ENCODE measurements at regions of chr17 and their contacts with region 1.

Region 1: GRCh38 chr17:9999919-10000695 is 95.0 kb upstream of the RCVRN start:
- DNase-seq: no peak
- ATAC-seq: no peak

Region 2: GRCh38 chr17:9905902-9906301 is 94.2 kb before region 1 on chr17:
- intact Hi-C with region 1: no loop called
- DNase-seq: peak; percentile 67
- ATAC-seq: peak; percentile 27 to 35

Region 3: GRCh38 chr17:9948928-9949327 is 51.2 kb before region 1 on chr17:
- intact Hi-C with region 1: loop called in 1 of 2 experiments (anchors 10 kb)
- DNase-seq: no peak
- ATAC-seq: peak; percentile 22 to 47

Region 4: DNA sequence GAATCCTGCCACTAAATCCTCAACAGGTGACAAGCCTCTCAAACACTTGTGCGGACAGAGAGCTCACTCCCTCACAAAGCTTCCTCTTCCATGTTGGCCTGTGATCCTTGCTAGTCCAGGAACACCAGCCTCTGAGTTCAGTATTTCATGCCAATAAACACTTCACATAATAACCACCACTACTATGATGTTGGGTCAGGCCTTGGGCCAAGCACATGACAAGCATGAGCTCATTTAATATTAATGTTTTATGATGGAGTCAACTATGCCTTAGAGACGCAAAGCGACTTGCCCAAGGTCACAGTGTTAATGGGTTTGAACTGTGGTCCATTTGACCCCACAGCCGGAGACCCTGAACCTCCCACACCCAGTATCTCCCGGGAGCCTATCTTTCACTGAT is 69.2 kb after region 1 on chr17:
- intact Hi-C with region 1: no loop called
- DNase-seq: peak; percentile 50
- ATAC-seq: peak; percentile 47 to 81